Esophagus muscularis mucosa (tissue), 4 donors: ENCODE measurements at regions of chr10 and their contacts with region 1.

Region 1: DNA sequence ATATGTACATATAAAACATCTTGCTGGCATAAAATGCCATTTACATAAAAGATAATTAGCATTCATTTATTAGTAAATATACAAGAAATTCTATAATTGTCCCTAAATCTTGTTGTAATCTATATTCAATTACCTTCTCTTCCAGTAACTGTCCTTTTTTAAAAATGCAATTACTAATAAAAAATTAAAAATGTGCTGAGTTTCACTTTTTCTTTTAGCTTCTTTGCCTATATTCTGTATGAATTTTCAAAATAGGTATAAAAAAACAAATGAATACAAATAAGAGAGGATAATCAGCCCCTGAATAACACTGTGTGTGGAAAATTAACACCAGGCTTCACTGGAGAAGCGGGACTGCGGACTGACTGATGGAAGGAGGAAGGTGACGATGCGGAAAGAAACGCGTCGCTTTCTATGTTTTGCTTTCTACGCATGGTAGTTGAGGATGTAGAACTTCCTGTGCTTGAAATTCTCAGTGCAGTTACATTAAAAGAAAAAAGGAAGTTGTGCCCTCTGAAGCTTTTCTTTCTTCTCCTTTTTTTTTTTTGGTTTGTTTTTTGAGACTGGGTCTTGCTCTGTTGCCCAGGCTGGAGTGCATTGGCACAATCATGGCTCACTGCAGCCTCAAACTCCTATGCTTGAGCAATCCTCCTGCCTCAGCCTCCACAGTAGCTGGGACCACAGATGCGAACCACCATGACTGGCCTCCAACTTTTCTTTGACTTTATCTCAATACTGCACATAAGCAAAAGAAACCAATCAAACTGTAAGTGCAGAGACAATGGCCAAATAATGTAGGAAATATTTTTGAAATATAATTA is 7.4 kb upstream of the ZMYND11 start:
- DNase-seq: no peak
- H3K4me3 ChIP-seq: no peak overlapping the region
- H3K27ac ChIP-seq: no peak overlapping the region
- H3K4me1 ChIP-seq: peaks cover 2 to 22% (median 15%) of the 10 kb centered on the region in 4 donors
- H3K27me3 ChIP-seq: no peaks in the 10 kb centered on the region
- CTCF ChIP-seq: no peak
- EP300 ChIP-seq: no peak
- POLR2A ChIP-seq: no peak

Region 2: DNA sequence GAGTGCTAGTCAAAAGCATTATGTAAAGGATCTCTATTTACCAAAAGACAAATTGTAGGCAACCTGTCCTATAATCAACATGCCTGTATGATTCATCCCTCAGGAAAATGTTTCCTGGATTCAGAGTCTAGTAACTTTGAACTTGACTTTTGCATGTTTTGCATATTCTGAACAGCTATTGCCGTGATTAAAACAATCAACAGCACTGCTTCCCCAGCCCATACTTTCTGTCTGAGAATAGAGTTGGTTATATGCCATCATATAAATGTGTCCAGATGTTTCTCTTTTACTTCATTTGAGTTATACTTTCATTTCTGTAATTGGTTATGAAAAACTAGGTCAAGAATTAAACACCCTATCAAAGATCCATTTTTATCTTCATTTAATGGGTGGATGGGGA is 91.0 kb after region 1 on chr10:
- intact Hi-C with region 1: loop called (anchors 5 kb)
- DNase-seq: no peak
- H3K4me3 ChIP-seq: no peak overlapping the region
- H3K27ac ChIP-seq: no peak overlapping the region
- H3K4me1 ChIP-seq: peaks cover 0 to 23% (median 20%) of the 10 kb centered on the region in 4 donors
- H3K27me3 ChIP-seq: no peaks in the 10 kb centered on the region
- CTCF ChIP-seq: no peak
- EP300 ChIP-seq: no peak
- POLR2A ChIP-seq: no peak

Region 3: DNA sequence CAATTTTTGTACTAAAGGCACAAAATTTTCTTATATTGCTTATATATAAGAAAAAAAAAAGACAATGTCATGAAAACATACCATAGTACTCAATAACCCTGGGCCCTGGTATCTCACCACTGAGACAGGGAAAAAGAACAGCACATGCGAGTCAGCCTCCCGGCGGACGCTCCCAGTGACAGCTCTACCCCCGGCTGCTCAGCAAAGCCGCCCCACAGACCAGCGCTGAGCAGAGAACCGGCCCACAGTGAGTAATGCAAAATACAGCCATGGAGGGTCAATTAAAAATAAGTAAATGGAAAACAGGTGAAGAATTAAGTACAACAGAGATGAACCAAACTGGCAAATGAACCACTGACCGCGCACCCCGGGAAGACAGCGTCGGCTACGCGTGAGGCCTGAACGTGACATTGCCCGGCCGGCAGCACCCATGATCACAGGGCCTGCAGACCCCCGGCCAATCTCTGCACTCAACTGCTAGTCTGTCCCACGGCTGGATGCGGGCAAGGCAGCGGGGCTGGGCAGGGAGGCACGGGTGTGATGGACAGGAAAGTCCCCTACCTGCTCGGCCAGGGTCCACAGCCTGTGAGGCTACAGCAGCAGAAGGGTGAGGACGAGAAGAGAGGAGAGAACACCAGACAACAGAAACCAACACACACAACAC is 183.3 kb after region 1 on chr10:
- intact Hi-C with region 1: no loop called
- DNase-seq: no peak
- H3K4me3 ChIP-seq: no peak overlapping the region
- H3K27ac ChIP-seq: no peak overlapping the region
- H3K4me1 ChIP-seq: peaks cover 0 to 16% (median 5%) of the 10 kb centered on the region in 4 donors
- H3K27me3 ChIP-seq: no peaks in the 10 kb centered on the region
- CTCF ChIP-seq: no peak
- EP300 ChIP-seq: no peak
- POLR2A ChIP-seq: no peak

Region 4: GRCh38 chr10:470338-470999 is 342.6 kb after region 1 on chr10:
- intact Hi-C with region 1: no loop called
- DNase-seq: peak; percentile 87
- H3K4me3 ChIP-seq: no peak overlapping the region
- H3K27ac ChIP-seq: no peak overlapping the region
- H3K4me1 ChIP-seq: no peaks in the 10 kb centered on the region
- H3K27me3 ChIP-seq: no peaks in the 10 kb centered on the region
- CTCF ChIP-seq: no peak
- EP300 ChIP-seq: no peak
- POLR2A ChIP-seq: no peak